Activated naive CD4-positive, alpha-beta T cell treated with anti-CD3 and anti-CD28 coated beads, Interleukin-2, amount 10 ng/mL, durations not matched to agents 7 days and 5 days (primary cell): ENCODE measurements at regions of chr7 and their contacts with region 1.

Region 1: GRCh38 chr7:37201003-37201875 is 247.4 kb downstream of the ELMO1 start:
- DNase-seq: peak; percentile 61
- H3K4me3 Mint-ChIP-seq: no peak overlapping the region
- H3K27ac Mint-ChIP-seq: no peak overlapping the region
- H3K4me1 Mint-ChIP-seq: peaks cover 10% of the 10 kb centered on the region
- H3K27me3 Mint-ChIP-seq: no peaks in the 10 kb centered on the region

Region 2: GRCh38 chr7:36473454-36474282 is 727.6 kb before region 1 on chr7:
- CTCF ChIA-PET with region 1: interaction called, 32 read pairs
- DNase-seq: peak; percentile 52
- H3K4me3 Mint-ChIP-seq: no peak overlapping the region
- H3K27ac Mint-ChIP-seq: no peak overlapping the region
- H3K4me1 Mint-ChIP-seq: peaks cover 11% of the 10 kb centered on the region
- H3K27me3 Mint-ChIP-seq: no peaks in the 10 kb centered on the region

Region 3: GRCh38 chr7:36487756-36488336 is 713.4 kb before region 1 on chr7:
- CTCF ChIA-PET with region 1: interaction called, 61 read pairs
- DNase-seq: peak; percentile 58
- H3K4me3 Mint-ChIP-seq: no peak overlapping the region
- H3K27ac Mint-ChIP-seq: no peak overlapping the region
- H3K4me1 Mint-ChIP-seq: no peaks in the 10 kb centered on the region
- H3K27me3 Mint-ChIP-seq: peaks cover 6% of the 10 kb centered on the region

Region 4: GRCh38 chr7:36670585-36671431 is 530.4 kb before region 1 on chr7:
- CTCF ChIA-PET with region 1: interaction called, 27 read pairs
- DNase-seq: peak; percentile 77
- H3K4me3 Mint-ChIP-seq: no peak overlapping the region
- H3K27ac Mint-ChIP-seq: no peak overlapping the region
- H3K4me1 Mint-ChIP-seq: peaks cover 18% of the 10 kb centered on the region
- H3K27me3 Mint-ChIP-seq: peaks cover 4% of the 10 kb centered on the region

Region 5: DNA sequence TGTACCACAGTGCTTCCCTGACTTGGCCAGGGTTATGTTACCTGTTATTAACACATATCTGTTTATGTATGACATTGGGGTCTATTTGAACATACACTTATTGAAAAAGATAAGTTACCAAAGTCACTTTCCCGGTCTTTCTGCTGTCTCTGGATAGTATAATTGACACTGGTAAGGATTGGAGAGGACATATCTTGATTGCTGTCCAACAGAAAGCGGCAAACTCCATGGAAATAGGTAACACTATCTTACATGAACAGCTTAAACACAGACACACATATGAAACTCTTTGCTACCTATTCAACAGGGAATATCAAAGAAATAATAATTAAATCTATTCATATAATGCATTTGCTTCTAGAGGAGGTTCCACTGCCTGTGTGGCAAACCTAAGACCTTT is 194.5 kb before region 1 on chr7:
- CTCF ChIA-PET with region 1: no interaction called
- DNase-seq: no peak
- H3K4me3 Mint-ChIP-seq: no peak overlapping the region
- H3K27ac Mint-ChIP-seq: no peak overlapping the region
- H3K4me1 Mint-ChIP-seq: no peaks in the 10 kb centered on the region
- H3K27me3 Mint-ChIP-seq: no peaks in the 10 kb centered on the region

Region 6: GRCh38 chr7:37265006-37265405 is 63.8 kb after region 1 on chr7:
- CTCF ChIA-PET with region 1: no interaction called
- DNase-seq: no peak
- H3K4me3 Mint-ChIP-seq: no peak overlapping the region
- H3K27ac Mint-ChIP-seq: no peak overlapping the region
- H3K4me1 Mint-ChIP-seq: peaks cover 18% of the 10 kb centered on the region
- H3K27me3 Mint-ChIP-seq: no peaks in the 10 kb centered on the region